ENCODE measurements at regions of chr3 and their contacts with region 1.

Region 1: DNA sequence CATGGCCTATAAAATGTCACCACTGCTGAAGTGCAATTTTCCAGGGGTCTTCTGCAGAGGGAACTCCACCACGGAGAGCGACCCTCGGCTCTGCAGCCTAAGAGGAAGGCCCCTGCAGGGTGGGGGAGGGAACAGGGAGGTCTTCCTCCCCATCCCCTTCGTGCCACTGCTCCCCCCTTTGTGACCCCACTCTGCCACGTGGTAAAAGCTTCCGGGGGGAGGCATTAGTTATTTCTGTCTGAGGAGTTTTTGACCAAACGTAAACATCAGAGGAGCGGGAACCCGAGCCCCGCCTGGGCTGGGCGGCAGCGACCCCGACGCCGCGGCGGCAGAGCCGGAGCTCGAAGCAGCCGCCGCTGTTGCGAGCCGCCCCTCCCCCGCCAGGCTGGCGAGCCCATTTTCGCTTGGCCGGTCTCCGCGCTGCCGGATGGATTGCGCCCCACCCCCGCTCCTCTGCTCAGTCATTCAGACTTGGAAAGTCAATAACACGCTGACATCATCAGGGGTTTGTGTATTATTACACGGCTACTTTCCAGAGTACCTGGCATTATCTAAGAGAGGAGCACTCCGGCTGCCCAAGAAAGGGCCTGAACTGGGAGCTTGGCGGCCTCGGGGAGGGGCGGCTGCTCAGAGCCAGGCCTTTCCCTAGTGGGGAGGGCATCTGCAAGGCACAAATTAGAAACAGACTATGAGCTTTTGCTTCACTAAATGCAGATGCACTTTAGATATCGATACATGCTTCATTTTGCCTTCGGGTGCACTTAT is 162.5 kb upstream of the TBL1XR1 start:
- DNase-seq: peak; percentile 96 to 98
- ATAC-seq: peak; percentile 92
- H3K4me3 ChIP-seq: no peak overlapping the region
- H3K27ac ChIP-seq: peak overlapping the region; percentile 9 to 66
- H3K4me1 ChIP-seq: peaks cover 0 to 4% of the 10 kb centered on the region in 2 donors
- H3K27me3 ChIP-seq: no peaks in the 10 kb centered on the region

Region 2: DNA sequence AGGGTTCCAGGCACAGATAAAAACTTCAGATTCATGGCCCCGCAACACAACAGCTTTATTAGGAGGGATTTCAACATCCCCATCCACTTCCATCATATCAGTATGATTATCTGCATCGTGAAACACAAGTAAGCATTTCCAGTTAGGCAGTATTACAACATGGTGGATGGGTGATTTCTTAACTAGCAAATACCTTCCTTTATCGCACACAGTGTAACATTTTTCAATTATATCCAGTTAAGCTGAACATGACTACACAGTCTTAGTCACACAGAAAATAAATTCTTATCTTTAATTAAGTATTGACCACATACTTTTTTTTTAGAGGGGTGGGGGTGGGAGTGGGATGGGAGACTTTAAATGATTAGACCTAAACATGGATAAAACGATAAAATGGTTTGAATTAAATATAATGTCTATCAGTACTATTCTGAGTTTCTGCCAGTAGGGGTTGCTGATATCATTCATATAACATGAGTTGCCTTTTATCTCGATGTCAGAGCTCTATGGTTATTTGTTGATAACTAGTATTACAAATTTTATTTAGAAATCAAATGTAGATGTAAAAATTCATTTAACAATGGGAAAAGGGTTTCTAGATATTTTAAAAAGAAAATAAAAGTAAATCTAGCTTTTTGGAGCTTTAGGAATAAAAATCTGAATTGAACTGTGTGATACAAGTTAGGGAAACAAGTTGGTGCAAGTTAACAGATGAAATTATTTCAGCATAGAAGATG is 309.1 kb before region 1 on chr3:
- intact Hi-C with region 1: loop called (anchors 5 to 10 kb)
- DNase-seq: no peak
- ATAC-seq: peak; percentile 79
- H3K4me3 ChIP-seq: no peak overlapping the region
- H3K27ac ChIP-seq: no peak overlapping the region
- H3K4me1 ChIP-seq: peaks cover 0 to 2% of the 10 kb centered on the region in 2 donors
- H3K27me3 ChIP-seq: no peaks in the 10 kb centered on the region

Region 3: GRCh38 chr3:177478170-177478860 is 118.5 kb after region 1 on chr3:
- intact Hi-C with region 1: loop called in 1 of 2 experiments (anchors 5 kb)
- DNase-seq: no peak
- ATAC-seq: peak; percentile 90
- H3K4me3 ChIP-seq: no peak overlapping the region
- H3K27ac ChIP-seq: peak overlapping the region in 1 of 2 donors; percentile 68
- H3K4me1 ChIP-seq: peaks cover 3 to 5% of the 10 kb centered on the region in 2 donors
- H3K27me3 ChIP-seq: no peaks in the 10 kb centered on the region

Region 4: GRCh38 chr3:177906126-177906511 is 546.3 kb after region 1 on chr3:
- intact Hi-C with region 1: loop called in 1 of 2 experiments (anchors 5 kb)
- DNase-seq: no peak
- ATAC-seq: peak; percentile 88
- H3K4me3 ChIP-seq: no peak overlapping the region
- H3K27ac ChIP-seq: peak overlapping the region; percentile 90 to 93
- H3K4me1 ChIP-seq: peaks cover 2 to 16% of the 10 kb centered on the region in 2 donors
- H3K27me3 ChIP-seq: no peaks in the 10 kb centered on the region

Region 5: GRCh38 chr3:178385280-178385952 is 1025.6 kb after region 1 on chr3:
- intact Hi-C with region 1: loop called in 1 of 2 experiments (anchors 10 kb)
- DNase-seq: no peak
- ATAC-seq: peak; percentile 82
- H3K4me3 ChIP-seq: no peak overlapping the region
- H3K27ac ChIP-seq: no peak overlapping the region
- H3K4me1 ChIP-seq: peaks cover 4 to 8% of the 10 kb centered on the region in 2 donors
- H3K27me3 ChIP-seq: no peaks in the 10 kb centered on the region

Measured in aorta (tissue), 5 donors.